ENCODE measurements at regions of chr17 and their contacts with region 1.

Region 1: GRCh38 chr17:71976011-71976649 is 144.7 kb upstream of the SOX9 start:
- DNase-seq: peak; percentile 97
- ATAC-seq: peak; percentile 98
- H3K4me3 ChIP-seq: no peak overlapping the region
- H3K27ac ChIP-seq: peak overlapping the region; percentile 82
- H3K4me1 ChIP-seq: peaks cover 3% of the 10 kb centered on the region; the same call in 1 of the 2 replicates
- H3K27me3 ChIP-seq: no peaks in the 10 kb centered on the region
- CTCF ChIP-seq: no peak
- POLR2A ChIP-seq: no peak; the same call in 1 of the 2 replicates
- RAD21 ChIP-seq: peak; percentile 18

Region 2: GRCh38 chr17:71633391-71633849 is 342.7 kb before region 1 on chr17:
- CTCF ChIA-PET with region 1: no interaction called
- POLR2A ChIA-PET with region 1: no interaction called
- dilution Hi-C with region 1: no loop called
- in situ Hi-C with region 1: no loop called
- intact Hi-C with region 1: loop called (anchors 10 kb)
- DNase-seq: peak; percentile 92
- ATAC-seq: peak; percentile 82
- H3K4me3 ChIP-seq: peak overlapping the region; percentile 9; the same call in 1 of the 2 replicates
- H3K27ac ChIP-seq: peak overlapping the region; percentile 79
- H3K4me1 ChIP-seq: peaks cover 8% of the 10 kb centered on the region
- H3K27me3 ChIP-seq: no peaks in the 10 kb centered on the region
- CTCF ChIP-seq: no peak
- POLR2A ChIP-seq: no peak
- RAD21 ChIP-seq: no peak

Region 3: DNA sequence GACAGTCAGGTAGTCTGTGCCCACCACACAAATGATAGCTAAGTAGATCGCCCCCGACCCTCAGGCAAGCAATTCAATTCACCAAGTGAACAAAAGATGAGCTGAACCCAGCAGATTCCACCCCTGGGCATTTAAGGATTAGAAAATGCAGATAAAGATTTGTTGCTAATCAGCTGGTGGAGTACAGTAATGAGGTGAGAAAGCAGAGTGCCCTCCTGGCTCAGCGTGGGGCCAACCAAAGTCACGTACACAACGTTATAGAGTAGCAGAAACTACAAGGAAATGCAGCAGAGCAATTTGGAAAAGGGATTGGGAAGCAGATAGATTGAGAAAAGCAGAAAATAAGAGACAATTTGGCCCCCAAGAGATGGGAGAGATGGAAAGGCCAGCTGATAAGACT is 235.9 kb after region 1 on chr17:
- CTCF ChIA-PET with region 1: no interaction called
- POLR2A ChIA-PET with region 1: no interaction called
- dilution Hi-C with region 1: no loop called
- in situ Hi-C with region 1: no loop called
- intact Hi-C with region 1: no loop called
- DNase-seq: no peak
- ATAC-seq: no peak
- H3K4me3 ChIP-seq: no peak overlapping the region
- H3K27ac ChIP-seq: no peak overlapping the region
- H3K4me1 ChIP-seq: no peaks in the 10 kb centered on the region
- H3K27me3 ChIP-seq: peaks cover 15% of the 10 kb centered on the region
- CTCF ChIP-seq: no peak
- POLR2A ChIP-seq: no peak
- RAD21 ChIP-seq: no peak

Region 4: GRCh38 chr17:72492494-72492893 is 516.4 kb after region 1 on chr17:
- CTCF ChIA-PET with region 1: no interaction called
- POLR2A ChIA-PET with region 1: interaction called, 11 read pairs
- dilution Hi-C with region 1: no loop called
- in situ Hi-C with region 1: no loop called
- intact Hi-C with region 1: no loop called
- DNase-seq: no peak
- ATAC-seq: no peak
- H3K4me3 ChIP-seq: no peak overlapping the region
- H3K27ac ChIP-seq: no peak overlapping the region
- H3K4me1 ChIP-seq: peaks cover 5% of the 10 kb centered on the region; the same call in 1 of the 2 replicates
- H3K27me3 ChIP-seq: no peaks in the 10 kb centered on the region
- CTCF ChIP-seq: no peak
- POLR2A ChIP-seq: no peak
- RAD21 ChIP-seq: no peak